Astrocyte of the cerebellum (primary cell): ENCODE measurements at regions of chr1 and their contacts with region 1.

Region 1: DNA sequence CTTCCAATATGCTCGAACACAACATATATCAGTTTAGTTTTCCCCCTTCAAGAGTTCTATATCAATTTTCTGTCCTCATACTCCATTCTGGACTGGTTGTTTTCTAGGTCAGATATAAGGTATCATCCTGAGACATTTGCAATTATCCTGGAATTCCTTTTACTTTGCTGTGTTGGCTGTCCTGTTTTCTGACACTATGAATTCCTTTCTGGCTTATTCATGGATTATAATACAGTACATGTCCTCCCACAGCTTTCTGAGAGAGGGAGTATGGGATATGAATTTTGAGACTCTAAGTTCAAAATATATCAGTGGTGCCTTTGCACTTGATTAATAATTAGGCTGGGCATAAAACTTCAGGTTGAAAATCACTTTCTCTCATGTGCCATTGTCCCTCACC is 11.9 kb downstream of the PHTF1 start:
- DNase-seq: no peak
- H3K4me3 ChIP-seq: no peak overlapping the region
- CTCF ChIP-seq: no peak

Region 2: DNA sequence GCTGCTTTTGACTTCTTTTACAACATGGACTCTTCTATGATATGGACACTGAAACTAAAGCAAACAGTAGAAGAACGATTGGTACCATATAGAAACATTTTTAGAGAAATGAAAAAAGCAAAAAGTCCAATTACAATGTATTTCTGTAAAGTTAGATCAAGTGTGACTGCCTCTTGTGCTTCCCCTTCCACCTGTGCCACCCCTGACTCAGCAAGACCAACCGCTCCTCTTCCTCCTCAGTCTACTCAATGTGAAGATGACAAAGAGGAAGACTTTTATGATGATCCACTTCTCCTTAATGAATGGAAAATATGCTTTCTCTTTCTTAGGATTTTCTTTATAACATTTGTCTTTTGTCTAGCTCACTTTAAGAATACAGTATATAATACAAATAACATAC is 55.0 kb before region 1 on chr1:
- in situ Hi-C with region 1: loop called (anchors 5 kb)
- DNase-seq: no peak
- H3K4me3 ChIP-seq: no peak overlapping the region
- CTCF ChIP-seq: no peak